Sciatic nerve (tissue), 2 donors: ENCODE measurements at regions of chr1 and their contacts with region 1.

Region 1: GRCh38 chr1:158035976-158036583 is 42.6 kb downstream of the KIRREL1 start:
- DNase-seq: no peak
- ATAC-seq: peak; percentile 65

Region 2: DNA sequence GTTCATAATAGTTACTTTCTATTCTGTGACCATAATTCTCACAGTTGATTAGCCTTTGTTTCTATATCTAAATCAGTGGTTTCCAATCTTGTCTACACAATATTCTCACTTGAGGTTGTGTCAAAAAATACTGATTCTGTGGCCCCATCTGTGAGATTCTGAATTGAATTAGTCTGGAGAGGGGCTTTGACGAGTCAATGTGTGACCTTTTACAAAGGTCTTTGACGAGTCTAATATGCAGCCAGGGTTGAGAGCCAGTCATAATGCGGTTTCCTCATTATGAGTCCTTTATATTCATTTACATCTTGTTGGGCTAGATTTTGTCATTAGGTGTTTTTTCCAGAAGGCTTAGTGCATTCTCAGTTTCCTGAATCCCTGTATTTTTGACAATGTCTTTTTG is 503.5 kb before region 1 on chr1:
- intact Hi-C with region 1: loop called (anchors 5 kb)
- DNase-seq: no peak
- ATAC-seq: no peak

Region 3: DNA sequence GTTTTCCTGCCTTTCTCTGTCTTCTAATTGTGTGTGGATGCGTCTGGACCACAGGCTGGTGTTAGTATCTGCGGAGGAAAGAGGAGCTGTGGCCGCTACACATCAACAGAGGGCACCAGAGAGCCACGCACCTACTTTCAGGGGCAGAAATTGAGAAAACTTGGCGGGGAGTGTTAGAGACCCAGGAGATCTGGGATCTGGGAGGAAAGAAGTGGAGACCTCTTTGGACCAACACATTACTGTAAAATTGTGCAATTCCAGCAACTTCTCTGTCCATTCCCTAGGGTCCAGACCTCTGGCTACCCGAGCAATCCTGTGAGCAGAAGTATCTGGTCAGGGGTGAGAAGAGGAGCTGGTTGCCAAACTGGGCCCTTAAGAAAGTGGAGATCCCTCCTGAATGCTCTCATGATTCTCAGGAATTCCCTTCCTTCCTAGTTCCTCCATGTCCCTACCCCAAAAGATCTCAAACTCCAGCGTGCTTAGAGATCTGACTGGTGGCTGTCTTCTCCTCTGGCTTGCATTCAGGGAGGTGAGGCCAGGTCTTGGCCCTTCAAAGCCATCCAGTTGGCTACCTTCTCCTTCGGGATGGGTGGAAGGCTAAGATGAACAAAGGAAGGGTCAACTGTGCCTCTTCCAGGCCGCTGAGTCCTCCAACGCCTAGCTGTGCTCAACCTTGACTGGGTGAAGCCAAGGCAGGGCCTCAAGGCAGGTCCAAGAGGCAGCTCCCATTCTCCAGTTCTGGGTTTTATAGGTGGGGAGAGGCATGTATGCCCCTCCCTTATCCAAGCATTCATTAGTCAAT is 43.8 kb before region 1 on chr1:
- intact Hi-C with region 1: loop called (anchors 5 kb)
- DNase-seq: peak; percentile 90
- ATAC-seq: peak; percentile 89

Region 4: DNA sequence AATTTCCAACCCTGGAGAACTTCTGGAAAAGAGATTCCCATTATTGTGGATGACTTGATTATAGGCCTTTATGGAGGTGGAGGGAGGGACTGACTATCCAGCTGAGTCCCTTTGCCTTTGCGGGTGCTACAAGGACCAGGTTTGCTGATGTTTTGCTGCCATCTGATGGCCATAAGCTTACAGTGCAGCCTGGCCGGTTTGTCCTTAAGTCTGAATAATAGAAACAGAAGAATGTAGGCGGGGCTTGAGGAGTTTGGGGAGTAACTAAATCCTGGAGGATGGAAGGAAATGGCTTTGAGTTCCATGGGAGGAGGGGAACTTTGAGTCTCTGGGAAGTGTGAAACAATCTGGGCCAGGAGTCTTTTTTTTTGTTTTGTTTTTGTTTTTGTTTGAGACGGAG is 88.9 kb after region 1 on chr1:
- intact Hi-C with region 1: loop called (anchors 10 kb)
- DNase-seq: peak; percentile 91
- ATAC-seq: peak; percentile 97